Activated CD8-positive, alpha-beta T cell treated with anti-CD3 and anti-CD28 coated beads for 36 hours (primary cell): ENCODE measurements at regions of chr17 and their contacts with region 1.

Region 1: GRCh38 chr17:40317880-40318829 is 9.2 kb downstream of the RARA start:
- DNase-seq: peak; percentile 95
- ATAC-seq: peak; percentile 68
- H3K4me3 Mint-ChIP-seq: peak overlapping the region; percentile 98
- H3K27ac Mint-ChIP-seq: peak overlapping the region; percentile 99
- H3K4me1 Mint-ChIP-seq: peaks cover 77% of the 10 kb centered on the region
- H3K27me3 Mint-ChIP-seq: no peaks in the 10 kb centered on the region
- CTCF ChIP-seq: no peak

Region 2: DNA sequence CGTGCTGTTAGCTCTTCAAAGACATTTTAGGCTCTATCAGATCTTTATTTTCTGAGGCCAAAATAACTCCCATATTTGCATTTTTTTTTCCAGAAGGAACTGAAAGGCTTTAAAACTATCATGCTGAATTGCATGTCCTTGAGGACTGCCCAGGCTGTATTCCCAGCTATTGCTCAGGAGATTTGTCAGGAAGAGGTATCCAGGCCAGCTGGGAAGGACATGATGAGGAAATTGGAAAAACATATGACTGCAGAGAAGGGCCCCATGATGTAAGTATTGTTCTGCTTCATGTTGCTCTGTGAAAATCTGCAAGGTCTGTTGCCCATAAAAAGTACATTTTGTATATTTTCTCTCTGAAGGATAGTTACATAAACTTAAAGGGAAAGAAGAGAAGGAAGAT is 24.8 kb before region 1 on chr17:
- CTCF ChIA-PET with region 1: interaction called, 10 read pairs
- POLR2A ChIA-PET with region 1: interaction called, 5 read pairs
- intact Hi-C with region 1: no loop called
- DNase-seq: no peak
- ATAC-seq: no peak
- H3K4me3 Mint-ChIP-seq: no peak overlapping the region
- H3K27ac Mint-ChIP-seq: no peak overlapping the region
- H3K4me1 Mint-ChIP-seq: peaks cover 35% of the 10 kb centered on the region
- H3K27me3 Mint-ChIP-seq: no peaks in the 10 kb centered on the region
- CTCF ChIP-seq: no peak

Region 3: DNA sequence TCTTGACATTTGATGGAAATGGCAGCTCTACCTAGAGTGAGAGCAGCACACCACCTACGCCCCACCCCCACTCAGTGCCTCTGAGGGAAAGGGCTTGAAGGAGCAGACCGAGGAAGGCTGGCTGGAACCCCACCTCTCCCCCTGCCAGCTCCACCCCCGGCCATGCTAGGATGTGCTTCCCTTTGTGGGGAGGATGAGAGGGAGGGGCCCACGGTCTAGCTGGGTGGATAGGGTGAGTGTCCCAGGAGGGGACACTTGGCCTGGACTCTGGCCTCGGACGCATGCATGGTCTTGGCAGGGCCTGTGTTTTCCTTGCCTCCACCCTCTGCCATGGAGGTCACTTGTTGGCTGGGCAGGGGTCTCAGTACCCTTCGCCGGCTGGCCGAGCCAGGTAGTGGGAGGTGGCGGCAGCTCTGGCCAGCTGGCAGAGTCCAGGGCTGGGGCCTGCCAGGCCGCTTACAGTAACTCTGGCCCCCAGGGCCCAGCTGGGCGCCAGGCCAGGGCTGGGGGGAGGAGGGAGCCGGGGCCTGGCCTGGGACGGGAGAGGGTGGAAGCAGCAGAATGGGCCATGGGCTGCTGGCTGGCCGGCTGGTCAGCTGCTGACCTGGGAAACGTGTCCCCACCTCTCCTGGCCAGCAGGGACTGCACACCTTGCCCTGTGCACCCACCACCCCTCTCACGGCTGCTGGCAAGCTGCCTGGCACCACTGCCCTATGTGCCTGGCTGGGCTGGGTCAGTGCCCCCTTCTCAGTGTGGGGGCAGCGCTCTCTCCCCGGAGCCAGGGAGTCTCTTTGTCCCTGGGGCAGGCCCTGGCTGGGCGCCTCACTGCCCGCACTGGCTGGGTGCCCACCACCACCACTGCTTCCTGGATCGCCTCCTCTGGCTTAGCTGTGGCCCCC is 13.8 kb after region 1 on chr17:
- CTCF ChIA-PET with region 1: interaction called, 14 read pairs
- POLR2A ChIA-PET with region 1: interaction called, 22 read pairs
- intact Hi-C with region 1: no loop called
- DNase-seq: peak; percentile 59
- ATAC-seq: peak; percentile 18
- H3K4me3 Mint-ChIP-seq: peak overlapping the region; percentile 15
- H3K27ac Mint-ChIP-seq: peak overlapping the region; percentile 80
- H3K4me1 Mint-ChIP-seq: peaks cover 71% of the 10 kb centered on the region
- H3K27me3 Mint-ChIP-seq: no peaks in the 10 kb centered on the region
- CTCF ChIP-seq: no peak